AG04450 (cell line): ENCODE measurements at regions of chr18 and their contacts with region 1.

Region 1: GRCh38 chr18:76982841-76983587 is 149.6 kb downstream of the MBP start:
- DNase-seq: peak; percentile 32
- H3K4me3 ChIP-seq: no peak overlapping the region
- H3K27ac ChIP-seq: no peak overlapping the region
- H3K27me3 ChIP-seq: peaks cover 5% of the 10 kb centered on the region
- CTCF ChIP-seq: peak; percentile 93

Region 2: DNA sequence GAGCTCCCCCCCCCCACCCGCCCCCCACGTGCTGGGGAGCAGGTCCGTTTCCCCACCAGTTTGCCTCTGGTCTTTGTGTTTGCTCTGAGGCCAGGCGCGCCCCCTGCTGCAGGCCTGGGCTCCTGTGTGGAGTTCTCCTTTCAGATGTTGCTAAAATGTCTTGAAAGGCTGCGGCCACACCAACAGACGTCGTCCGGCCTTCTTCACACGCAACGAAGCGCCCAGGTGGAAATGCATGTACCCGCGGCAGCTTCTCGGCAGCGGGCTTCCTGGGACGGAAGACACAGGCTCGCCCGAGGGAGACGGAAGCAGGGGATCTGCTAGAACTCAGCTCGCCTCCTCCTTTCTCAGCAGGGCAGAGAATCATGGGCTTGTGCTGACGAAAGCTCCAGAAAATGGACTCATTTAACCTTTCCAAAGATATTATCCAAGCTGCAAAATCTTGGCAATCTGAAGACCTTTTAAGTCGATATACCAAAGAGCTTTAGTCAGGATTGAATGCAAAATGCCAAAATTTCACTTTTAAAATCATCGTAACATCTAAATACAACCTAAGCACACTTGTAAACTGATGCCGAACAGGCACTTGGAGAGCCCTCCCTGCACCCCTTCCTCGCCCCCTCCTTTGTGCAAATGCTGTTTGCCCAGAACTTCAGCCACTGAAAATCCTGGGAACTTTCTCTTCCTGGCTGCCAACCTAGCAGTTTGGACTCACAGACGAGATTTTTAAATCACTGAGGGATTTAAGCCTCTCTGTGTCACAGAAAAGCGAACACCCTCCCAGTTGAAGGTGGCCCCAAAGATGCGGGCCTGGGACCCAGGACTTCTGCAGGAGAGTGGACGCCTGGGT is 362.5 kb before region 1 on chr18:
- CTCF ChIA-PET with region 1: no interaction called
- POLR2A ChIA-PET with region 1: no interaction called
- DNase-seq: peak; percentile 42
- H3K4me3 ChIP-seq: peak overlapping the region; percentile 36; the same call in 1 of the 2 replicates
- H3K27ac ChIP-seq: peak overlapping the region; percentile 68
- H3K27me3 ChIP-seq: peaks cover 2% of the 10 kb centered on the region
- CTCF ChIP-seq: peak; percentile 77

Region 3: GRCh38 chr18:76709659-76710645 is 273.1 kb before region 1 on chr18:
- CTCF ChIA-PET with region 1: no interaction called
- POLR2A ChIA-PET with region 1: no interaction called
- DNase-seq: peak; percentile 41
- H3K4me3 ChIP-seq: no peak overlapping the region
- H3K27ac ChIP-seq: no peak overlapping the region
- H3K27me3 ChIP-seq: peaks cover 5% of the 10 kb centered on the region
- CTCF ChIP-seq: peak; percentile 93

Region 4: GRCh38 chr18:76803814-76804213 is 179.2 kb before region 1 on chr18:
- CTCF ChIA-PET with region 1: interaction called, 78 read pairs
- POLR2A ChIA-PET with region 1: no interaction called
- DNase-seq: no peak
- H3K4me3 ChIP-seq: peak overlapping the region; percentile 38; the same call in 1 of the 2 replicates
- H3K27ac ChIP-seq: no peak overlapping the region
- H3K27me3 ChIP-seq: peaks cover 6% of the 10 kb centered on the region
- CTCF ChIP-seq: peak; percentile 94

Region 5: DNA sequence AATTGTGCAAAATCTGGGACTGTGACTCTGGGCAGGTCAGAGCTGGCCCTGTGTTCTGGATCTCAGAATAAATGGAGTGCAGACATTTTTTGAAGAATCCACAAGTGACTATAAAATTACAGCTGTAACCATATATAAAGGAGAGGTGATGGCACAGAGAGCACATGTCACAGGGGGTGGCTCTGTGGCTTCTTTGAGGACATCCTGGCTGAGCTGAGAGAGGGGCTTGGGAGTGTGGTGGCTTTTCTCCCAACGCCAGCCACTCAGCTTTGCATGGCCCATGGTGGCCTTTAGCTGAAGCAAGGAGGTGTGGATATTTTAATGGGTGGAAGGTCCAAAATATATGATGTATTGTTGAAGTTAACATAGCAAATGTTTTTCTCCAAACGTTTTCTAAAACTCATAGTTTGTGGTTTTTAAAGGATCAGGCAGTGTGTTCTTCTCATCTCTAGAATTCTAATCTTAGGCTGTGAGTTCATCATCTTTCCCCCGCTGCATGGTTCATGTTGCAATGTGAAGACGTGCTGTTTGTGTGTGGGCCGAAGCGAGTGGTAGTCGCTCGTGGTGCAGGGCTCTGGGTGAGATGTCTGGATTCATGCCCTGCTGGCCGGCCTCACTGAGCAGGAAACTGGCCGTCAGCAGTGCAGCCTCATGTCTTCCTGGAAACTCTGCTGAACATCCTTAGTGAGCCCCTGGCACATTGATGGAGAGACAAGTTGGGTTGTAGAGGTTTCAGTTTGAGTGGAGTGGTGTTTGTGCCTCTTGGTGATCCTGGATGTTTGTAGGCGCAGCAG is 50.8 kb before region 1 on chr18:
- CTCF ChIA-PET with region 1: interaction called, 18 read pairs
- POLR2A ChIA-PET with region 1: no interaction called
- DNase-seq: peak; percentile 80
- H3K4me3 ChIP-seq: peak overlapping the region; percentile 17; the same call in 1 of the 2 replicates
- H3K27ac ChIP-seq: peak overlapping the region; percentile 85
- H3K27me3 ChIP-seq: no peaks in the 10 kb centered on the region
- CTCF ChIP-seq: no peak

Region 6: GRCh38 chr18:76943542-76944339 is 39.3 kb before region 1 on chr18:
- CTCF ChIA-PET with region 1: interaction called, 18 read pairs
- POLR2A ChIA-PET with region 1: no interaction called
- DNase-seq: peak; percentile 60
- H3K4me3 ChIP-seq: no peak overlapping the region
- H3K27ac ChIP-seq: no peak overlapping the region
- H3K27me3 ChIP-seq: no peaks in the 10 kb centered on the region
- CTCF ChIP-seq: no peak

Region 7: GRCh38 chr18:76970770-76971559 is 12.0 kb before region 1 on chr18:
- CTCF ChIA-PET with region 1: interaction called, 33 read pairs
- POLR2A ChIA-PET with region 1: no interaction called
- DNase-seq: no peak
- H3K4me3 ChIP-seq: no peak overlapping the region
- H3K27ac ChIP-seq: no peak overlapping the region
- H3K27me3 ChIP-seq: no peaks in the 10 kb centered on the region
- CTCF ChIP-seq: no peak

Region 8: GRCh38 chr18:77207540-77207939 is 224.5 kb after region 1 on chr18:
- CTCF ChIA-PET with region 1: interaction called, 35 read pairs
- POLR2A ChIA-PET with region 1: no interaction called
- DNase-seq: peak; percentile 27
- H3K4me3 ChIP-seq: no peak overlapping the region
- H3K27ac ChIP-seq: peak overlapping the region; percentile 11
- H3K27me3 ChIP-seq: no peaks in the 10 kb centered on the region
- CTCF ChIP-seq: peak; percentile 71

Region 9: DNA sequence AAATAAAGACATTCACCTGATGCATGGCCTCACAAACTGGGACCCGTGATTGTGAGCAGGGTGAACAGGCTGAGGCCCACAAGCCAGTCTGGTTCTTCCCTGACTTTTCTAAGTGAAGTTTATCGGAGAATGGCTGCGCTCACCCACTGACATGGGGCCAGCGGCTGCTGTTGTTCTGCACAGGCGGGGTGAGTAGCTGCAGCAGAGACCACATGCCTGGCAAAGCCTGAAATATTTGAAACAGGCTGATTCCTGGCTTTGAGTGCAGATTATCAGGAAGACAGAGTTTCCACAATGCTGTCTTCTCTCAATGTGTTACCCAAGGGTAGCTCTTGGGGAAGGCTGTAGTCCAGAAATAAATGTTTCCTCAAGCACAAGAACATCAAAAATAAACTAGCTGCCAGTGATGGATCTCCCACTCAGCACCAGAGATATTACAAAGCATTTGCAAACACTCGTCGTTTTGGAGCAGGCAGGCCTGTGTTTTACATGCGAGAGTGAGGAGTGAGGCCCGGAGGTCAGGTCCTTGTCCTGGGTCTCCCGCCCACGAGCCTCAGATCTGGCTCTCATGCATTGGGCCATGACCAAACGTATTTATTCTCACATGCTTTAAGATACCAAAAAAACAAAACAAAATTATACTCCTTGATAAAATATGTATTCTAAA is 913.7 kb after region 1 on chr18:
- CTCF ChIA-PET with region 1: no interaction called
- POLR2A ChIA-PET with region 1: no interaction called
- DNase-seq: no peak
- H3K4me3 ChIP-seq: no peak overlapping the region
- H3K27ac ChIP-seq: no peak overlapping the region
- H3K27me3 ChIP-seq: no peaks in the 10 kb centered on the region
- CTCF ChIP-seq: no peak